ENCODE measurements at regions of chr10 and their contacts with region 1.

Region 1: GRCh38 chr10:119207367-119207668 is at the start of gene GRK5:
- DNase-seq: peak; percentile 99
- H3K4me3 Mint-ChIP-seq: peak within 1 kb of the TSS; percentile 92
- H3K27ac Mint-ChIP-seq: peak within 1 kb of the TSS; percentile 98
- H3K4me1 Mint-ChIP-seq: peaks cover 38% of the 10 kb centered on the region
- H3K27me3 Mint-ChIP-seq: no peaks in the 10 kb centered on the region
- total RNA-seq, gene GRK5: 25.6 and 27.3 TPM in 2 replicates

Region 2: DNA sequence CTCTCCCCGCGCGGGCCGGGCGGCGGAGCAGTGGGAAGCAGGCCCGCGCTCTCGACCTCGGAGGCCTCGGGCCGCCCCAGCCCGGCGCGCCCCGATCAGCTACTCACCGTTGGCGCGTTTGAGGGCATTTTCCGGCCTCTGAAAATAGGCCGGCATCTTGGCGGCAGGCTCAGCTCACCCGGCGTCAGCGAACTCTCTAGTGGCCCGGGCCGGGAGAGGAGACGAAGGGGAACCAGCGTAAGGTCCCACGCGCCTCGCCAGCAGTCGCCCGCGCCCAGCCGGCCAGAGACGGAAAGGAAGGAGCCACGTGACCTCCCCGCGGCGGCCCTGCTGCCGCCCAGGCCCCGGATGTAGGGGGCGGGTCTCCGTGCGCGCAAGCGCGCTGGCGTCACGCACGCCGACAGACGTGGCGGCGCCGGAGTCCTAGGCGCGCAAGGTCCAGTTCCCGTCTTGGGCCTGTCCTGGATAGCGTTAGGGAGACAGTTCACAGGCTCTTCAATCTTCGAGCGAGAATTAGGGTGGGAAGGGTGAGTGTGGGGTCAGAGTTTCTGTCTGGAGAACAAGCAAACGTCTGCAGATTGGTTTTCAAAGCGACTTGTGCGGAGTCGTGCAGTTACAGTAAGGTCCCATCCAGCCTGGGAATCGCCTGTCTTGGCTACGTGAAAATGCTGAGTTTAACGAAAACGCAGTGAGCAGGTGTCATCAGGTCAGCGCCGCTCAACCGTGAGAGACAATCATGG is 126.6 kb before region 1 on chr10 and contains the start of gene EIF3A:
- intact Hi-C with region 1: loop called (anchors 1 kb)
- DNase-seq: peak; percentile 99
- H3K4me3 Mint-ChIP-seq: peak within 1 kb of the TSS; percentile 87
- H3K27ac Mint-ChIP-seq: peak within 1 kb of the TSS; percentile 92
- H3K4me1 Mint-ChIP-seq: peaks cover 29% of the 10 kb centered on the region
- H3K27me3 Mint-ChIP-seq: no peaks in the 10 kb centered on the region
- total RNA-seq, gene EIF3A: 179 and 183 TPM in 2 replicates

Region 3: DNA sequence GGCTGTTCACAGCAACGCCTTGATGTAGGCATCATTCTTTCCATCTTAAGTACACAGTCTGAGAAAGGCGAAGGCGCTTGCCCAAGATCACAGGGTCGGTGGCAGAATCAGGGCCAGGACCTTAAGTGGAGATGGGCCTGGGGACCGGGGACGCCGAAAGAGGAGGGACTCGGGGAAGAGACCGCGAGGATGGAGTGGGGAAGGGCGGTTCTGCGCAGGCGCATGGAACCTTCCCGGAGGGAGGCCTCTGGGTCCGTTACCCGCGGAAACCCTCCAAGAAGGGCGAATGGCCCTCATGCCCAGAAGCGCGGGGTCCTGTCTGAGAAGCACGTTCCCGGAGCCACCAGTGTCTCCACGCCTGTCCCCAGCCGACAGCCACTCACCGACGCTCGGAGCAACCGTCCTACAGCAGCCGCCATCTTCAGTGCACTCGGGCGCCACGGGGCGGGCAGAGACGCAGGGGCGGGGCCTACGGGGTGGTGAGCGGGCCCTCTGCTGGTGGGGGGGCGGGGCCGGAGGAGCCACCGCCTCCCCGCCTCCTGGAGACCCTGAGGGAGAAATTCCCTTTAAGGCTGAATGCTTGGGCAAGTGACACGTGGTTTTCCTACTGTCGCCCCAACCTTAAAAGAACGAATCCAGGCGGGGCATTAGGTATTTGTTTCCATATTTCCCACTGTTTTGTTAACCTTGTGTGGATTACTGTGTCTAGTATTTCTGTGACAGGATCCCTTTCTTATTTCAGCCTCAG is 28.8 kb before region 1 on chr10 and contains the start of gene PRDX3:
- intact Hi-C with region 1: loop called (anchors 1 kb)
- DNase-seq: peak; percentile 98
- H3K4me3 Mint-ChIP-seq: peak within 1 kb of the TSS; percentile 98
- H3K27ac Mint-ChIP-seq: peak within 1 kb of the TSS; percentile 99
- H3K4me1 Mint-ChIP-seq: peaks cover 39% of the 10 kb centered on the region
- H3K27me3 Mint-ChIP-seq: no peaks in the 10 kb centered on the region
- total RNA-seq, gene PRDX3: 179 and 180 TPM in 2 replicates

Region 4: GRCh38 chr10:119268871-119269506 is 61.7 kb after region 1 on chr10:
- intact Hi-C with region 1: loop called (anchors 1 kb)
- DNase-seq: peak; percentile 95
- H3K4me3 Mint-ChIP-seq: peak overlapping the region; percentile 75
- H3K27ac Mint-ChIP-seq: peak overlapping the region; percentile 99
- H3K4me1 Mint-ChIP-seq: peaks cover 60% of the 10 kb centered on the region
- H3K27me3 Mint-ChIP-seq: no peaks in the 10 kb centered on the region

Region 5: GRCh38 chr10:119355930-119356329 is 148.6 kb after region 1 on chr10:
- intact Hi-C with region 1: no loop called
- DNase-seq: no peak
- H3K4me3 Mint-ChIP-seq: no peak overlapping the region
- H3K27ac Mint-ChIP-seq: no peak overlapping the region
- H3K4me1 Mint-ChIP-seq: peaks cover 11% of the 10 kb centered on the region
- H3K27me3 Mint-ChIP-seq: no peaks in the 10 kb centered on the region

Region 6: DNA sequence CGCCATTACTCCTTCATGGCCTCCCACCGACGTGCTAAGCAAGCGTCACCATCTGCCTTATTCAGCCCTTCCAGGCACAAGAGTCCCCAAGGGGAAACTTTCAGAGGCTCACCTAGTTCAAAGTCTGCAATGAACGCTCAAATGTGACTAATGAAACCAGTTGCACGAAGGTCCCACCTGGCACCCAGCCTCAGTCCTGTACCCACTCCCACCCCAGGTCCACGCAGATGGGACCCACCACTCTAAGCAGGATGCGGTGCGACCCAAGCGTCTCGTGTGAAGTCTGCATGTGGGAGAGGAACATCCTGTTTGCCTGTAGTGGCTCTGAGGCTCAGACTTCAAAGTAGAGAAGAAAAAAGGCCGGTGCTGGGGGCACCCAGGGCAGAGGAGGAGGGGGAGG is 294.9 kb after region 1 on chr10:
- intact Hi-C with region 1: loop called (anchors 2 kb)
- DNase-seq: peak; percentile 93
- H3K4me3 Mint-ChIP-seq: peak overlapping the region; percentile 72
- H3K27ac Mint-ChIP-seq: peak overlapping the region; percentile 97
- H3K4me1 Mint-ChIP-seq: peaks cover 73% of the 10 kb centered on the region
- H3K27me3 Mint-ChIP-seq: no peaks in the 10 kb centered on the region

Region 7: DNA sequence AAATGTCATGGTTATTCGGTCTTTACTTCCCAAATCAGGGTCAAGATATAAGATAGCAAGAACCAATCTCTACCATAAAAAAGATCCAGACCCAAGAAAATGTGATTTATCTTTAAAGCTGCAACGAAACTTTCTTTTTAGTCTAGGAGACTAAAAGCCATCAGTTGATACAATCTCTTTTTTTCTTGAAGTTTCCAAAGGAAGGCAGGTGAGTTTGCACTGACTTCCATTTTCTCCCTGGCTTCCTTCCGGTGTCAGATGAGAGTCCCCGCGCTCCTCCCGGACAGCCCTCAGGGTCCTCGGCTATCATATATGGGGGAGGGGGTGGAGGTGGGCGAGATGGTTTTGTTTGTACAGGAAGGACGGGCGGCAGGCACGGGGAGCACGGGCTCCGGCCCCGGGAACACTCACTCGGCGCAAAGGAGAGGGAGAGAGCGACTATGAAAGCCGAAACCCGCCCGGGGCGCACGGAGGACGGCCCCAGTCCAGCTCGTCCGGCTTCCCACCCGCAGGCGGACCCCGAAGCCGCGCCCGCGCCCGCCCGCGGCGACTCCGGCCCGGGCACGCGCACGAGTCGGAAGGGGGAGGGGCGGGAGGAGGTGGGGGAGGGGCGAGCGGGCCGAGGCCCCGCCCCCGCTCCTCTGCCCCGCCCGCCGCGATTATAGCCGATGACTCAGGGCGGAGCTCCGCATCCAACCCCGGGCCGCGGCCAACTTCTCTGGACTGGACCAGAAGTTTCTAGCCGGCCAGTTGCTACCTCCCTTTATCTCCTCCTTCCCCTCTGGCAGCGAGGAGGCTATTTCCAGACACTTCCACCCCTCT is 443.6 kb after region 1 on chr10 and contains the start of gene BAG3:
- intact Hi-C with region 1: loop called (anchors 5 kb)
- DNase-seq: peak; percentile 93
- H3K4me3 Mint-ChIP-seq: peak within 1 kb of the TSS; percentile 99
- H3K27ac Mint-ChIP-seq: peak within 1 kb of the TSS; percentile 99
- H3K4me1 Mint-ChIP-seq: peaks cover 40% of the 10 kb centered on the region
- H3K27me3 Mint-ChIP-seq: no peaks in the 10 kb centered on the region
- total RNA-seq, gene BAG3: 27.7 and 29.1 TPM in 2 replicates